ENCODE measurements at regions of chr22 and their contacts with region 1.

Region 1: DNA sequence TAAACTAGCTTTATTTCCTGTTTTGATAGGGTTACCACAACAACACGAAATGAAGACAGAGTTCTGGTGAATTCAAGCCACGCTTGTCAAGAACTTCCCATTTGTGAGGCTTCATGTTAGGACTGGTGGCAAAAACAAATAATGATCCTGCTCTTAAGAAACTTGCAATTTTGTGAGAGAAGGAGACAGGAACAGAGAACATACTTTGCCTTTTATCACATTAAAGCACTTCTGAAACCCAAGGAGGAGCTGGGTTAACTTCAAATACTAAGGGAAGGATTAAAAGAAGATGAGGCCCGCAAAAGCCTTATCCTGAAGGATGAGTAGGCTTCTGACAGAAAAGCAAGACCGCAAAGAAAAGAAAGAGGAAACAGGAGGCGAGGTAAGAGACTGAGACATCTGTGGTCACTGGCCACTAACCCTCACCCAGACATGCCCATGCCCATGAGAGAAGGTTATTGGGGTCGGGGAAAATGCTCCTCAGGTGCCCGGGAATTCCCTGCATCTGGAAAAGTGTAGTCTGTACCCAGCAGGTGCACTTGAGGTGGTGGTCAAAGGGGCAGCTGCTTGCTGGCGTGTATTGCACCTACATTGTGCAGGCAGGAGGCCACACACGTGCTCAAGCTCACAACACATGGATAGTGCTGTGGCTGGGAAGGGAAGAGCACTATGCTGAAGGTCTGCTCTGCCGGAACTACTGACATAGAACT is 50.5 kb downstream of the MAPK1 start:
- DNase-seq: peak; percentile 23
- ATAC-seq: peak; percentile 91
- H3K4me3 Mint-ChIP-seq: peak overlapping the region; percentile 67
- H3K27ac Mint-ChIP-seq: peak overlapping the region; percentile 95
- H3K4me1 Mint-ChIP-seq: peaks cover 63% of the 10 kb centered on the region
- H3K27me3 Mint-ChIP-seq: no peaks in the 10 kb centered on the region

Region 2: GRCh38 chr22:21766691-21767462 is 50.1 kb before region 1 on chr22:
- CTCF ChIA-PET with region 1: interaction called, 3 read pairs
- POLR2A ChIA-PET with region 1: no interaction called
- intact Hi-C with region 1: loop called (anchors 1 to 10 kb)
- DNase-seq: peak; percentile 83
- ATAC-seq: peak; percentile 77
- H3K4me3 Mint-ChIP-seq: no peak overlapping the region
- H3K27ac Mint-ChIP-seq: peak overlapping the region; percentile 71
- H3K4me1 Mint-ChIP-seq: peaks cover 65% of the 10 kb centered on the region
- H3K27me3 Mint-ChIP-seq: no peaks in the 10 kb centered on the region

Region 3: DNA sequence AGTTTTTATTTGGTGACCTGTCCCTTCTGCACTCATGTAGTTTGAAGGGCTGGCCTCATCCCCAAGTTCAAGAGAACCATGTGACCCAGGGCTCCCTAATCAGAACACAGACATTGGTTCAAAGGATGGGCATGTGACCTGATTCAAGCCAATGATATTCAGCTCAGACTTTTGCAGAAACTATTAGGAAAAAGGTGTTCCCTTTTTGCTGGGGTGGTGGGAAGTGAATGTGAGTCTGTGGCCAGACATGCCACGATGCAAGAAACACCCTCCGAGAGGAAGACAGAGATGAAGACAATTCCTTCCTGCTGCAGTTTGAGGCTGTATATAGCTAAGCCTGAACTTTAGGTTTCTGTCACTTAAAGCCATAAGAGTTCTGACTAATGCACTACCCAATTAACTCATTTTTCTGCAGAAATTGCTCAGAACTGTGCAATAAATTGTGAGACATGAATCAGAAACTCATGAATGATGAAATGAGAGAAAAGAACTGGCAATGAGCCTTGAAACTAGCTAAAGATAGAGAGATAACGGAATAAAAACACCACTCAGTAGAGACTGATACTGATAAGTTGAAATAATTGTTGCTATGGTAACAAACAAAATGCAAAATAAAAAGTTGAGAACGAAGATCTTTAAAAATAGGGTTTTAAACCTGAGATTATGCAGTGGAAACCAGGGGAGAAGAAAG is 59.7 kb after region 1 on chr22:
- CTCF ChIA-PET with region 1: interaction called, 3 read pairs
- POLR2A ChIA-PET with region 1: interaction called, 7 read pairs
- intact Hi-C with region 1: loop called in 1 of 2 experiments (anchors 1 kb)
- DNase-seq: peak; percentile 63
- ATAC-seq: peak; percentile 96
- H3K4me3 Mint-ChIP-seq: no peak overlapping the region
- H3K27ac Mint-ChIP-seq: peak overlapping the region; percentile 93
- H3K4me1 Mint-ChIP-seq: peaks cover 20% of the 10 kb centered on the region
- H3K27me3 Mint-ChIP-seq: peaks cover 5% of the 10 kb centered on the region